MCF 10A (cell line): ENCODE measurements at regions of chr1 and their contacts with region 1.

Region 1: DNA sequence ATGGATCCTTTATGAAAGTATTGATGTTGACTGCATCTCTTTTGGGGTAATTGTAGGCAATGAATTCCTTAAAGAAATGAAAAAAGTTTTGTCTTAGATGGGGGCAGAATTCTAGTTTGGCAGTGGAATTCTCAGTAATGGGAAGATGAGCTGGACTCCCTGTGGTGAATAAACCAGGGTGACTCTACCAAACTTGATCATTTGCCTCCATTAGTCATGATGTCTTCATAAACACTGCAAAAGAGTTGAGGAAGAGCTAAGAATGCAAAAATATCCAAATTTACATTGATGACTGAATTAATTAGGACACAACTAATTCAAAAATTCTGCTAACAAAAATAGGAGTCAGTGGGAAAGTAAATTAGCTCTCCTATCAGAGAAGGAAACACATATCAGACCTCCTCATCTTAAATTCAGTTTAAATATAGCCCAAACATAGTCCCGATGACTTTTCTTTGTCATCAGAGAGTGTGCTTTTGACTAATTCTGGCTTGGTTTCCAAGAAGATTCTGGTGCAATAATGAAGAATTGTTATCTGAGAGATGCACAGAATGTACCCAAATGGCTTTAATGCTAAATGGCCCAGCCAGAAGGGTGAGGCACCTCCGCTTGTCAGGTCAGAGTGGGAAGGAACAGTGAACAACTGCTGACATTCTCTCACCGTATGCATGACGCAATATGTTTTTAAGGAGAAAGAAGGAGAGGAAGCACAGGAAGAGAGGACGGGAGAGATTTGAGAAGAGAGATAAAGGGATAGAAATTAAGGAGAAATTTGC is 525.1 kb downstream of the LMO4 start:
- DNase-seq: peak; percentile 63
- H3K4me3 Mint-ChIP-seq: peak overlapping the region; percentile 7
- H3K27ac Mint-ChIP-seq: peak overlapping the region; percentile 81
- H3K4me1 Mint-ChIP-seq: peaks cover 10% of the 10 kb centered on the region
- H3K27me3 Mint-ChIP-seq: no peaks in the 10 kb centered on the region
- CTCF ChIP-seq: no peak

Region 2: GRCh38 chr1:87869567-87869966 is 15.8 kb after region 1 on chr1:
- CTCF ChIA-PET with region 1: no interaction called
- POLR2A ChIA-PET with region 1: interaction called, 21 read pairs
- intact Hi-C with region 1: no loop called
- DNase-seq: peak; percentile 86
- H3K4me3 Mint-ChIP-seq: peak overlapping the region; percentile 33
- H3K27ac Mint-ChIP-seq: peak overlapping the region; percentile 95
- H3K4me1 Mint-ChIP-seq: peaks cover 31% of the 10 kb centered on the region
- H3K27me3 Mint-ChIP-seq: no peaks in the 10 kb centered on the region
- CTCF ChIP-seq: no peak